Natural killer cell (primary cell): ENCODE measurements at regions of chr11 and their contacts with region 1.

Region 1: DNA sequence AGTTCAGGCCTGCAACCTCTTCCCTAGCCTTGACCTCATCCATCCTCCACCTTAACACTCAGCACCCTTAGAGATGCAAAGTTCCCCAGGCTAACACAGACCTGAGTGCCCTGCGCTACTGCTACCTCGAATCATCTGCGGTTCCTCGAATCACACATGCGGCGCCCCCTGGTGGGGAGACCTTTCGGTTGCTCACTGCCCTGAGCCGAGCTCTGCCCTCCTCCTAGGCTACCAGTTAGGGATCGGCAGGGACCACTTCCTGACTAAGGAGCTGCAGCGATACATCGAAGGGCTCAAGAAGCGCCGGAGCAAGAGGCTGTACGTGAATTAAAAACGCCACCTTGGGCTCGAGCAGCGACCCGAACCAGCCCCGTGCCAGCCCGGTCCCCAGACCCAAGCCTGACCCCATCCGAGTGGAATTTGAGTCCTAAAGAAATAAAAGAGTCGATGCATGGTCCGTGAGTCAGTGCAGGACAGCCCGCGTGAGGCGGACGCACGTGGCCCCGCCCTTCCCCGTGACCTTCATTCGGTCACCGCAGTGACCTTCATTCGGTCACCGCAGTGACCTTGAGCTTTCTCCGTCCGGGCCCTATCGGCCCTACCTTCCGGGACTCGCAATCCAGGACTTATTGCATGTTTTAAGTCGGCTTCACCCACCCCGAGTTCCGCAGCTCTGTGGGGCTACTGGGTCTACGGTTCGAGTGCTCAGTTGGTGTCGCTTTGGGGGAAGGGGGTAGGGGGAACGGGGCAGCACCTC is 830 bp upstream of the ESRRA start:
- DNase-seq: peak; percentile 93 to 96
- ATAC-seq: peak; percentile 33 to 47 (median 34)
- H3K4me3 ChIP-seq: peak overlapping the region; percentile 68
- H3K4me3 Mint-ChIP-seq: peak overlapping the region; percentile 93
- H3K27ac ChIP-seq: peak overlapping the region; percentile 88
- H3K27ac Mint-ChIP-seq: peak overlapping the region; percentile 91 to 97
- H3K4me1 ChIP-seq: peaks cover 54% of the 10 kb centered on the region
- H3K4me1 Mint-ChIP-seq: peaks cover 21 to 37% of the 10 kb centered on the region in 2 donors
- H3K27me3 ChIP-seq: peaks cover 19% of the 10 kb centered on the region
- H3K27me3 Mint-ChIP-seq: peaks cover 6 to 17% of the 10 kb centered on the region in 2 donors
- CTCF ChIP-seq: peak; percentile 83

Region 2: GRCh38 chr11:64204464-64204989 is 100.0 kb before region 1 on chr11:
- intact Hi-C with region 1: loop called (anchors 1 kb)
- DNase-seq: peak; percentile 69 to 96
- ATAC-seq: peak; percentile 39 to 60 (median 55)
- H3K4me3 ChIP-seq: no peak overlapping the region
- H3K4me3 Mint-ChIP-seq: peak overlapping the region; percentile 74
- H3K27ac ChIP-seq: no peak overlapping the region
- H3K27ac Mint-ChIP-seq: peak overlapping the region; percentile 77 to 88
- H3K4me1 ChIP-seq: peaks cover 50% of the 10 kb centered on the region
- H3K4me1 Mint-ChIP-seq: peaks cover 28 to 53% of the 10 kb centered on the region in 2 donors
- H3K27me3 ChIP-seq: no peaks in the 10 kb centered on the region
- H3K27me3 Mint-ChIP-seq: no peaks in the 10 kb centered on the region
- CTCF ChIP-seq: peak; percentile 68

Region 3: DNA sequence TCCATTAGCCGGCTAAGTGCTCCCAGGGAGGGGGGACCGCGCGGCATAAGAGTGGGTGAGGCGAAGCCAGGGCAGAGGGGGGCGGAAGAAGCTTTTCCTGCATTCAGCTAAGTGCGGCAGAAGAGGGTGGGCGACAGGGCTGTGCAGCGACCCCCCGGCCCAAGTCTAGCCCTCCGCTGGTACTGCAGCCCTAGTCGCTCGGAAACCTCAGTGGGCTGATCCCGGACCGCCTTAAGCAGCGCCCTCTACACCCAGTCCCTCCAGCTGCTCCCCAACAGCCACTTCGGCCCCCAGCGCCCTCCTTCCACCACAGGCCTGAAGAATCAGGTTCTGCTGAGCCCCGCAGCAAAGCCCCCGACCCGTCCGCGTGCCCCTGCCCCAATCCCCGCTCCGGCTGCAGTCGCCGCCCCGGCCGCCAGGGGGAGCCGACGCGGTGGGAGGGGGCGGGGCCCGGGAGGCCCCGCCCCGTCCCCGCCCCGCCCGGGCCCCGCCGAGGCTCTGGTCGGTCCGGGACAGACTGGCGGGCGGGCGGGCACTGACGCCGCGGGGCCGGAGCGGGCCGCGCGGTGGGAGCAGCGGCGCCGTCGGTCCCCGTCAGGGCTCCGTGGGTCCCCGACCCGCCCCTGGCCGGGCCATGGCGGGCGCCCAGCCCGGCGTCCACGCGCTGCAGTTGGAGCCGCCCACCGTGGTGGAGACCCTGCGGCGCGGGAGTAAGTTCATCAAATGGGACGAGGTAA is 53.3 kb before region 1 on chr11 and contains the start of gene PLCB3:
- intact Hi-C with region 1: loop called (anchors 1 kb)
- DNase-seq: peak; percentile 67 to 77
- ATAC-seq: peak; percentile 72 to 86 (median 79)
- H3K4me3 ChIP-seq: peak within 1 kb of the TSS; percentile 58
- H3K4me3 Mint-ChIP-seq: peak within 1 kb of the TSS; percentile 86
- H3K27ac ChIP-seq: no peak within 1 kb of the TSS
- H3K27ac Mint-ChIP-seq: peak within 1 kb of the TSS in 1 of 2 donors; percentile 86
- H3K4me1 ChIP-seq: peaks cover 41% of the 10 kb centered on the region
- H3K4me1 Mint-ChIP-seq: peaks cover 14 to 30% of the 10 kb centered on the region in 2 donors
- H3K27me3 ChIP-seq: no peaks in the 10 kb centered on the region
- H3K27me3 Mint-ChIP-seq: no peaks in the 10 kb centered on the region
- CTCF ChIP-seq: peak; percentile 78
- total RNA-seq, gene PLCB3: 5.4 to 7.6 (median 5.5) TPM

Region 4: GRCh38 chr11:64284048-64284961 is 20.2 kb before region 1 on chr11 and contains the start of gene BAD:
- intact Hi-C with region 1: loop called (anchors 1 kb)
- DNase-seq: peak; percentile 84 to 94
- ATAC-seq: peak; percentile 76 to 90 (median 78)
- H3K4me3 ChIP-seq: peak within 1 kb of the TSS; percentile 87
- H3K4me3 Mint-ChIP-seq: peak within 1 kb of the TSS; percentile 93
- H3K27ac ChIP-seq: peak within 1 kb of the TSS; percentile 99
- H3K27ac Mint-ChIP-seq: peak within 1 kb of the TSS; percentile 94 to 96
- H3K4me1 ChIP-seq: peaks cover 22% of the 10 kb centered on the region
- H3K4me1 Mint-ChIP-seq: peaks cover 12 to 16% of the 10 kb centered on the region in 2 donors
- H3K27me3 ChIP-seq: no peaks in the 10 kb centered on the region
- H3K27me3 Mint-ChIP-seq: no peaks in the 10 kb centered on the region
- CTCF ChIP-seq: no peak
- total RNA-seq, gene BAD: 30.6 to 35.8 (median 31.6) TPM

Region 5: DNA sequence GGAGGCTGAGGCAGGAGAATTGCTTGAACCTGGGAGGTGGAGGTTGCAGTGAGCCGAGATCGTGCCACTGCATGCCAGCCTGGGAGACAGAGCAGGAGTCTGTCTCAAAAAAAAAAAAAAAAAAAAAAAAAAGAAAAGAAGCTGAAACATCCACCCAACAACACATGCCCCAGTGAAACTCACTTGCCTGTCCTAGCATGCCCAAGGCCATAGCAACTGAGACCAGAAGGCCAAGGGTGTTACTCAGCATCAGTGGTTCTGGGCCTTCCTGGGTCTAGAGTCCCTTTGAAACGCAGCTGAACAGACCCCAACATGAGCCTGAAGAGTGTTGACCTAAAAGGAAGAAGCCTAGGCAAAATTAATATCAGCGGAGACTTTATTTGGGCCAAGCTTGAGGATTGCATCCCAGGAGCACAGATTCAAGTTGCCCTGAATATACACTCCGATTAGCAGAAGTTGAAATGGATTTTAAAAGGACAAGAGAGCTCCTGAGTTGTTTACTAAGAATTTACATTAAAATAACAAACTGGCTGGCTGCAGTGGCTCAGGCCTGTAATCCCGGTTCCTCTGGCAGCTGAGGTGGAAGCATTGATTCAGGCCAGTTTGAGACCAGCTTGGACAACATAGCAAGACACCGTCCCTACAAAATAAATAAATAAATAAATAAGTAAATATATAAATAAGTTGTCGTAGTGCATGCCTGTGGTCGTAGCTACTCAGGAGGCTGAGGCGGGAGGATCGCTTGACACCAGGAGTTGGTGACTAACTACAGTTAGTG is 20.4 kb after region 1 on chr11:
- intact Hi-C with region 1: no loop called
- DNase-seq: no peak
- ATAC-seq: no peak
- H3K4me3 ChIP-seq: no peak overlapping the region
- H3K4me3 Mint-ChIP-seq: no peak overlapping the region
- H3K27ac ChIP-seq: no peak overlapping the region
- H3K27ac Mint-ChIP-seq: no peak overlapping the region
- H3K4me1 ChIP-seq: no peaks in the 10 kb centered on the region
- H3K4me1 Mint-ChIP-seq: peaks cover 13 to 22% of the 10 kb centered on the region in 2 donors
- H3K27me3 ChIP-seq: no peaks in the 10 kb centered on the region
- H3K27me3 Mint-ChIP-seq: no peaks in the 10 kb centered on the region
- CTCF ChIP-seq: no peak

Region 6: GRCh38 chr11:64341851-64342791 is 37.6 kb after region 1 on chr11:
- intact Hi-C with region 1: loop called (anchors 5 kb)
- DNase-seq: peak; percentile 91
- ATAC-seq: peak; percentile 66 to 79 (median 67)
- H3K4me3 ChIP-seq: no peak overlapping the region
- H3K4me3 Mint-ChIP-seq: peak overlapping the region; percentile 95
- H3K27ac ChIP-seq: no peak overlapping the region
- H3K27ac Mint-ChIP-seq: peak overlapping the region; percentile 96 to 98
- H3K4me1 ChIP-seq: peaks cover 48% of the 10 kb centered on the region
- H3K4me1 Mint-ChIP-seq: peaks cover 33 to 61% of the 10 kb centered on the region in 2 donors
- H3K27me3 ChIP-seq: no peaks in the 10 kb centered on the region
- H3K27me3 Mint-ChIP-seq: no peaks in the 10 kb centered on the region
- CTCF ChIP-seq: peak; percentile 11

Region 7: GRCh38 chr11:64352099-64352994 is 47.9 kb after region 1 on chr11:
- intact Hi-C with region 1: no loop called
- DNase-seq: no peak
- ATAC-seq: no peak
- H3K4me3 ChIP-seq: no peak overlapping the region
- H3K4me3 Mint-ChIP-seq: no peak overlapping the region
- H3K27ac ChIP-seq: no peak overlapping the region
- H3K27ac Mint-ChIP-seq: no peak overlapping the region
- H3K4me1 ChIP-seq: peaks cover 5% of the 10 kb centered on the region
- H3K4me1 Mint-ChIP-seq: peaks cover 0 to 13% of the 10 kb centered on the region in 2 donors
- H3K27me3 ChIP-seq: no peaks in the 10 kb centered on the region
- H3K27me3 Mint-ChIP-seq: no peaks in the 10 kb centered on the region
- CTCF ChIP-seq: no peak